ENCODE measurements at regions of chr2 and their contacts with region 1.

Region 1: DNA sequence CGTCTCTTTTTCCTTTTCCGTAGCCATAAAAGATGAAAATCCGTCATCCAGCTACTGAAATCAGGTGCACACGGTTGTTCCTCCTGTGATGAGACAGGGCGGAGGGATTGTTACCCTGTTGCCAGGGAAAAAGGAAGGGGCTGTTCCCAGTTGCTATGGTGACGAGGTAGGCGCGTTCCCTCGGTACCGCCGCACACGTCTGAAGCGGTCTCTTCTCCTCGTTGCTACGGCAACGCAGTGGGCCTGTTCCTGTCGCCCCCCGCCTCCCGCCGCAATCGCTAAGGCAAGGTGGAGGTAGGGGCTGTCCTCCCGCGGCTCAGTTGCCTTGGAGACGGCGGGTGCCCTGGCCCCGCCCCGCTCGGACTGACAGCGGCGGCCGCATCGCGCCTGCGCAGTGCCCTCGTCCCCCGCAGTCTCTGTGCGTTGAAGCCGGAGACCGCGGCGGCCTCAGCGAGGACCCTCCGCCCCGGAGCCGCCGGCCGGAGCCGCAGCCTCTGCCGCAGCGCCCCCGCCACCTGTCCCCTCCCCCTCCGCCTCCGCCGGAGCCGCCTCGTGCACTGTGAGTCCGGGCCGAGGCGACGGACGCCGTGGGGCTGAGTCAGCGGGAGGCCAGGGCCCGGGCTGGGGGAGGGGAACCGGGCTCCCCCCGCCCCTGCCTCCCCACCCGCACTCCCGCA is at the start of gene MAPRE3:
- DNase-seq: peak; percentile 82 to 91
- H3K4me3 ChIP-seq: peak within 1 kb of the TSS; percentile 94
- H3K4me3 Mint-ChIP-seq: peak within 1 kb of the TSS; percentile 63
- H3K27ac Mint-ChIP-seq: peak within 1 kb of the TSS; percentile 68
- H3K4me1 ChIP-seq: 0 out of 2 replicates have a peak, but pooled peaks cover 3% of the 10 kb centered on the region
- H3K4me1 Mint-ChIP-seq: peaks cover 13% of the 10 kb centered on the region
- H3K27me3 ChIP-seq: peaks cover 1% of the 10 kb centered on the region; the same call in 1 of the 2 replicates
- H3K27me3 Mint-ChIP-seq: peaks cover 12% of the 10 kb centered on the region
- CTCF ChIP-seq: no peak
- total RNA-seq, gene MAPRE3: 4.9 and 5.7 TPM in 2 replicates

Region 2: DNA sequence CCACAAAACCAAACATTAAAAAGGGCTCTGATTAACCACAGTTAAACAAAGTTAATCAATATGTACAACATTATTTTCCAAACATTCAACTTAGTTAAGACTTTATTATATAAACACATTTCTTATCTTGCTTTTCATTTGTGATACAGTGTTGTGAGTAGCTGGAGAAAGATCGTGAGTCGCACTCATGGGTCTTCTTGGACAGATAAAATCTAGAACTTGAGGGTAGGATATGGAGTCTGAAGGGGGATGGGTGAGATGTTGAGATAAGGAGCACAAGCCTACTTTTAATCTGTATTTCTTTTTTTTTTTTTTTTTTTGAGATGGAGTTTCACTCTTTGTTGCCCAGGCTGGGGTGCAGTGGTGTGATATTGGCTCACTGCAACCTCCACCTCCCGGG is 39.8 kb after region 1 on chr2:
- CTCF ChIA-PET with region 1: no interaction called
- POLR2A ChIA-PET with region 1: no interaction called
- intact Hi-C with region 1: loop called (anchors 2 kb)
- DNase-seq: no peak
- H3K4me3 ChIP-seq: no peak overlapping the region
- H3K4me3 Mint-ChIP-seq: no peak overlapping the region
- H3K27ac Mint-ChIP-seq: no peak overlapping the region
- H3K4me1 ChIP-seq: peaks cover 20% of the 10 kb centered on the region
- H3K4me1 Mint-ChIP-seq: peaks cover 21% of the 10 kb centered on the region
- H3K27me3 ChIP-seq: no peaks in the 10 kb centered on the region
- H3K27me3 Mint-ChIP-seq: no peaks in the 10 kb centered on the region
- CTCF ChIP-seq: no peak

Region 3: DNA sequence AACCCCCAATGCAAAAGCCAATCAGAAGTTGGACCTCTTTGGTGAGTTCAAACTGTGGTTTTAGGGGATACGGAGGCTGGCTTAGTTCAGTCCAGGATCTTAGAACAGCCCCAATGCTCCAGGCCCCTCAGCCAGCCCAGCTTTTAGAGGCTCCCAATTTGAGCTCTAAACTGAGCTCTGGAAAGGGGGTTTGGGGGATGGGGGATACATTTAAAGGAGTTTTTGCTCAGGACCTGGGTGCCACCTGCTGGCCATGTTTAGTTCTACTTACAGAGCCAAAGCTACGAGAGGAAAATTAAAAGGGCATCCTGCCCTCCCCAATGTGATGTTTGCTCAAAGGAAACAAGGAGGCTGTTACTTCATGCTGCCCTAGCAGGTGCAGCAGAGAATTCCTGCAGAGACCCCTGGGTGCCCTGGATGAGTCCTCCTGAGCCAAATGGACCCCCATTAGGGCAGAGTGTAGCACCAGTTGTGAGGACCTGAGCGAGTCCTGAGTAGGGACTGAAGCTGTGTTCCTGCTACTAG is 46.5 kb after region 1 on chr2:
- CTCF ChIA-PET with region 1: interaction called, 10 read pairs
- POLR2A ChIA-PET with region 1: interaction called, 11 read pairs
- intact Hi-C with region 1: no loop called
- DNase-seq: peak; percentile 72 to 73
- H3K4me3 ChIP-seq: no peak overlapping the region
- H3K4me3 Mint-ChIP-seq: no peak overlapping the region
- H3K27ac Mint-ChIP-seq: no peak overlapping the region
- H3K4me1 ChIP-seq: peaks cover 31% of the 10 kb centered on the region
- H3K4me1 Mint-ChIP-seq: peaks cover 23% of the 10 kb centered on the region
- H3K27me3 ChIP-seq: no peaks in the 10 kb centered on the region
- H3K27me3 Mint-ChIP-seq: no peaks in the 10 kb centered on the region
- CTCF ChIP-seq: peak; percentile 64 to 85

Region 4: GRCh38 chr2:27050281-27050995 is 80.1 kb after region 1 on chr2:
- CTCF ChIA-PET with region 1: no interaction called
- POLR2A ChIA-PET with region 1: no interaction called
- intact Hi-C with region 1: no loop called
- DNase-seq: peak; percentile 92 to 95
- H3K4me3 ChIP-seq: peak overlapping the region; percentile 96
- H3K4me3 Mint-ChIP-seq: peak overlapping the region; percentile 80
- H3K27ac Mint-ChIP-seq: peak overlapping the region; percentile 100
- H3K4me1 ChIP-seq: 0 out of 2 replicates have a peak, but pooled peaks cover 6% of the 10 kb centered on the region
- H3K4me1 Mint-ChIP-seq: peaks cover 31% of the 10 kb centered on the region
- H3K27me3 ChIP-seq: no peaks in the 10 kb centered on the region
- H3K27me3 Mint-ChIP-seq: peaks cover 10% of the 10 kb centered on the region
- CTCF ChIP-seq: peak; percentile 37 to 49

Region 5: DNA sequence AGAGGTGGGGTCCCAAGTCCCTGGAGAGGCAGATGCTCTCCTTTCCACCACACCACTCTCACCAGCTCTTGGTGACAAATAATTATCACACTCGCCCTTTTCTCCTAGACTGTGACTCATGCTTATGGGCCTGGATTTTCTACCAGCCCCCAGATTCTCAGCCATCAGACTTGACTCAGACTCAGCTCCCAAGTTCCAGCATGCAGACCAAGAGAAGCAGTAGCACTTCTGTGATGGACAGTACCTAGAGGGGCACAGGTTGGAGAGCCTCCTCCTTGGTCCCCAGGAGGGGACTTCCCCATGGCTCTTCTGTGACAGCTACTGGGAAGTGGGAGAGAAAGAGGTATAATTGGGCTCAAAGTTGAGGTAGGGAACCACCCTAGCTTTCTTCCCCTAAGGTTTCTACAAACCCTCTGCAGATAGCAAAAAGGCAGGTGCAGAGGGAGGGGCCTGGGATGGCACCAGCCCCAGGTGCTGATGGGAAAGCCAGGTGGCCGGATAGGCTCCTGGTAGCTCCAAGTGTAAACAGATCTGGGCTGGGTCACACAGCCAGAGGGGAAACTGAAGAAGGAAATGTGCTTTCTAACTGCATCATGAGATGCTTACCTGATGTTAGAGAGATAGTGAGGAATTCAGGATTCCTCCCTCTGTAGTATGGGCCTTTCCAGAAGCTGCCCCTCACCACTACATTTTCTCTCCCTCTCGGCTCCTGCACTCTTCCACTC is 182.6 kb after region 1 on chr2:
- CTCF ChIA-PET with region 1: no interaction called
- POLR2A ChIA-PET with region 1: no interaction called
- intact Hi-C with region 1: no loop called
- DNase-seq: no peak
- H3K4me3 ChIP-seq: no peak overlapping the region
- H3K4me3 Mint-ChIP-seq: no peak overlapping the region
- H3K27ac Mint-ChIP-seq: no peak overlapping the region
- H3K4me1 ChIP-seq: 0 out of 2 replicates have a peak, but pooled peaks cover 4% of the 10 kb centered on the region
- H3K4me1 Mint-ChIP-seq: no peaks in the 10 kb centered on the region
- H3K27me3 ChIP-seq: no peaks in the 10 kb centered on the region
- H3K27me3 Mint-ChIP-seq: no peaks in the 10 kb centered on the region
- CTCF ChIP-seq: no peak